ENCODE measurements at regions of chr2 and their contacts with region 1.

Region 1: GRCh38 chr2:219430633-219431615 is 3.7 kb upstream of the SPEG start:
- DNase-seq: no peak
- H3K4me3 ChIP-seq: no peak overlapping the region
- H3K27ac ChIP-seq: peak overlapping the region; percentile 74 to 75
- H3K4me1 ChIP-seq: peaks cover 10 to 18% of the 10 kb centered on the region in 2 donors
- H3K27me3 ChIP-seq: no peaks in the 10 kb centered on the region
- CTCF ChIP-seq: peak; percentile 40 to 53 (median 43)

Region 2: DNA sequence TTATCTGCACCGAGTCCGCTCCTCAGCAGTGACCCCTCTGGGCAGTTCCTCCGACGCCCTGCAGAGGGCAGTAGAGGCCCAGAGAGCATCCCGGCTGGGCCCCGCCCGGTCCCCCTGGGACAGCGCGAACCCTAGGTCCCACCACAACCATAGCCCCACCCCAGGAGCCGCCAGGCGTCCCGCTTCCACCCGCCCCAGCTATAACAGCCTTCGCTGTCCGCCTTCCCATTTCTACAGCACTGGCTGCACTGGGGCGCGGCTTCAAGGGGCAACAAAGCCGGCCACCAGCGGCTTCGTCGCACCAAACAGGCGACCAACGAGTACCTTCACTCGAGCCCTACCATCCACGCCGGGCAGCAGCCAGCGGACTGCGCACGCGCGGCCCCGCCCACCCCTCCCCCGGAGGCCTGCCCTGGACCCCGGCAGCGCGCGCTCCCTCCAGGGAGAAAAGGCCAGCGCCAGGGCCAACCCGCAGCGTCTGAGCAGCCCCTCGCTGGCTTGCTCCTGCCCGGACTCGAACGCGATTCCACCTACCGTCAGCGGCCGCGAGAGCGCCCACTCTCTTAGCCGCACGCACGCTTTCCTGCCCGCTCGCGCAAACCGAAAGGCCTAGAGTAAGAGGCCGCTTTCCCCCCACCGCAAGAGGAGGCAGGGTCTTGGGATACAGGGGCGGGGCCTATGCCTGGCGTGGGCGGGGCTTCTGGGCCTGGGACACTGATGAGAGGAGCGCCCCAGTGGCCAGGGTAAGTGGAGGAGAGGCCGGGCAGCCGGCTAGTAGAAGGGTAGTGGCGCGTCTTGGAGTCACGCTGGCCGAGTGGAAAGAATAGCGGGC is 270.5 kb before region 1 on chr2 and contains the start of gene NHEJ1:
- intact Hi-C with region 1: no loop called
- DNase-seq: peak; percentile 88 to 98
- H3K4me3 ChIP-seq: peak within 1 kb of the TSS; percentile 66 to 86
- H3K27ac ChIP-seq: peak within 1 kb of the TSS; percentile 86 to 89
- H3K4me1 ChIP-seq: peaks cover 0 to 8% of the 10 kb centered on the region in 2 donors
- H3K27me3 ChIP-seq: no peaks in the 10 kb centered on the region
- CTCF ChIP-seq: peak; percentile 97 to 100 (median 100)
- total RNA-seq, gene NHEJ1: 21.6 TPM

Region 3: DNA sequence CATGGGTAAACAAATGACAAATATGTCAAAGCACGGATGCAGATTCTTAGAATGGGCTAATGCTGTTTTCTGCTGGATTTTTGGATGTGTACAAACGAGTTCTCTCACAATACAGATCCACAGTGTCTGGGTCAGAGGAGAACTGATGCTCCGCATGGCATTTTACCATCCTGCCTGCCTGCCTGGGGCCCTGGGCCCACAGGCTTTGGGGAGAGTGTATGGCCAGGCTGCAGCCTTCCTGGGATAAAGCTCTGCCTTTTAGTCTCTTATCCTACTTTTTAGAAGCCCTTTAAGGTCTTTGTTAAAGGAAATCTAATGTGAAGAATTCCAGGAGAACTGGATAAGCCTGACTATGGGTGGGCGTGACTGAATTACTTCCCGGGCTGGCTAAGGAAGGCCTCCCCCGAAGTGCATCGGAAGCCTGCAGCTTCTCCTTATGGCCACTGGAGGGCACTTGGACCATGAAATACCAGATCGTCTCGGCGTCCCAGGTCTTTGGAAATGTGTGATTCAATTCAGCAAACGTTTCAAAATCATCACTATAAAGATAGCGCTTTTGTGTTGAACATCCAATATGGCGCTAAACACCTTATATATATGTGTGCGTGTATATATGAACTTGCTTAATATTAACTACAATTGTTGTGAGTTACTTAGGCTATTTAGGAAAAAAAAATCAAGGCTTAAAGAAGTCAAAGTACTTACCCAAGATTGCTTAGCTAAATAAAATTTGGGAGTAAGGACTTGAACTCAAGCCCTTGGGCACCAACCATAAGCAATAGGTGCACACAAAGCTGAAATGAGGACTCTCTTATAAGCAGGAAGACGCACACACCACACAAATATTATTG is 28.0 kb before region 1 on chr2:
- intact Hi-C with region 1: loop called (anchors 2 kb)
- DNase-seq: peak in 1 of 2 donors; percentile 88
- H3K4me3 ChIP-seq: no peak overlapping the region
- H3K27ac ChIP-seq: peak overlapping the region; percentile 88 to 94
- H3K4me1 ChIP-seq: peaks cover 23 to 42% of the 10 kb centered on the region in 2 donors
- H3K27me3 ChIP-seq: no peaks in the 10 kb centered on the region
- CTCF ChIP-seq: peak; percentile 90 to 95 (median 93)

Region 4: DNA sequence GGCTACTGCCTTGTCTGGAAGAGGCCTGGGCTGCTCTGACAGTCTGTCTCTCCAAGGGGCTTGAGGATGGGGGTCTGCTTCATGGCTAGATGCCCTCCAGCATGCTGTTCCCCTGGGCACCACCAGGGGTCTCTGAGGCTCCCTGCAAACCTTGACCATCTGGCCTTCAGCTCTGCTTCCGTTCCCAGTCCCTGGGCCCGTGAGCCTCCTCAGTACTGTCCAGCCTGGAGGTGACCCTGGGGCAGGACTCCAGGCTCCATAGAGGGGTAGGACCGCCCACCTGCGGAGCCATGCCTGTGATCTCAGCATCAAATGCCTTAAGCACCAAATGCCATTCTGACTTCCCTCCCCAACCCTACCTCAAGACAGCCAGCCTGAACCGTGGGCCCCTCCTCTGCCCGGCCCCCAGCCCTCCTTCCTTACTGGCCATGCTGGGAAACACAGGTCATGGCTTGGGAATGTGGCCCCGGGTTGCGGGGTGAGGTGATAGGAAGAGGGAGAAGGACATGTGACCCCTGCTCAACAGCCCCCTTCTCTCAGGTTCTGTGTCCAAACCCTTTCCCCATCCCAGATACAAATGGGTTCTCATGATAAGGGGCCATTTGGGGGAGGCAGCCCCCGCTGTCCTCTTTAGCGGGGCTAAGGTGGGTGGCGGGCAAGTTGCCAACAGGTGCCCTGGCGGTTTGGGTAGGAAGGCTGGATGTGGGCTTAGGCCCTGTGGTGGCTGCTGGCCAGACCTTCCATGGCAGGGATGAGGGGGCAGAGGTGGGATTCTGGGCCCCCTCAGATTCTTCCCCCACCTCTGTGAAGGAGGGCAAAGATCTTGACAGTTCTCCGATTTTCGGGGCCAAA is 28.8 kb after region 1 on chr2:
- intact Hi-C with region 1: loop called (anchors 2 kb)
- DNase-seq: peak in 1 of 2 donors; percentile 87
- H3K4me3 ChIP-seq: peak overlapping the region in 1 of 2 donors; percentile 42
- H3K27ac ChIP-seq: peak overlapping the region; percentile 91 to 94
- H3K4me1 ChIP-seq: peaks cover 35 to 63% of the 10 kb centered on the region in 2 donors
- H3K27me3 ChIP-seq: no peaks in the 10 kb centered on the region
- CTCF ChIP-seq: peak; percentile 74 to 90 (median 84)

Region 5: DNA sequence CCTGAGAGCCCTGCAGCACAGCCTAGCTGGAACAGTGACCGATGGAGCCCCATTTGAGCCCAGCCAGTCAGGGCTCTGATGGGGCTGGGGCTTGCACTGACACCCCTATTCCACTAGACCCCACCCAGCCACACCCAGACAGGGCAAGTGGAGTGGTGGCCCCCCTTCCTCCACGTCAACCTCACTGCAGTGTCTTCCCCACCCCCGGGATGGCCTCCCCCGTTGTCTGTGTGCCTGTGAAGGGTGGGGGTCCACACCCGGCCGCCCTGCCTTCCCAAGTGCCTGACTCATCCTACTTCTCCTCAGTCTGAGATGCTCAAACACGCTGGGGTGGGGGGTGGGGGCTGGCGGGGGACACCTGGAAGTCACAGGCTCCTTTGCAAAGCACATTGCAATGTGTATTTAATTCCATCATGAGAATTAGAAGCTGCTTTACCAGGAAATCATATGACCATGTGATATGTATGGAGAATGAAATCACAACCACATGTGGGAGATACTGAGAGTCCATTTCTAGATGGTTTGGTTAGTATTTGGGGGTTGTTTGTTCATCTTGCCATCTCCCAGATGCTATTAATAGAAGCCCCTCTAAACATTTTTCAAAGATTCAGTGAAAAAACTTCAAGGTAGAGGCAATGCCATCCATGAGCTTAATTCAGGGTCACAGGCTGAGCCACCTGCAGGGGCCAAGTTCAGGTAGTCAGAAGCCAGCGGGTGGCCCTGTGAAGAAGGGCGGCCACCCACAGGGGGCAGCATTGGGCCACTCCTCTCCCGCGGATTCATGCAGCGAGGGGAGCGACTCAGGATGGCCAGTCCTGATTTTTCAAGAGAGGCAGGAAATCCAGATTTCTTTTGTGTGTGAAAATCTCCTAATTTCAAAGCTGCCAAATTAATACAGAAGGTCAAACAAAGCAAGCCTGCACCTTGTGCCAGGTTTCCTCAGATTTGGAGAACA is 45.0 kb after region 1 on chr2:
- intact Hi-C with region 1: loop called (anchors 2 kb)
- DNase-seq: peak in 1 of 2 donors; percentile 81
- H3K4me3 ChIP-seq: no peak overlapping the region
- H3K27ac ChIP-seq: peak overlapping the region; percentile 51 to 73
- H3K4me1 ChIP-seq: no peaks in the 10 kb centered on the region
- H3K27me3 ChIP-seq: no peaks in the 10 kb centered on the region
- CTCF ChIP-seq: peak; percentile 67 to 88 (median 87)

Region 6: GRCh38 chr2:219498280-219499057 is 67.5 kb after region 1 on chr2 and contains the start of gene GMPPA:
- intact Hi-C with region 1: loop called (anchors 1 kb)
- DNase-seq: peak; percentile 95 to 99
- H3K4me3 ChIP-seq: peak within 1 kb of the TSS; percentile 68 to 85
- H3K27ac ChIP-seq: peak within 1 kb of the TSS; percentile 91 to 99
- H3K4me1 ChIP-seq: peaks cover 13 to 26% of the 10 kb centered on the region in 2 donors
- H3K27me3 ChIP-seq: no peaks in the 10 kb centered on the region
- CTCF ChIP-seq: peak in 1 of 3 experiments; percentile 27
- total RNA-seq, gene GMPPA: 11.4 TPM

Region 7: GRCh38 chr2:219530048-219530963 is 99.4 kb after region 1 on chr2:
- intact Hi-C with region 1: loop called (anchors 1 kb)
- DNase-seq: peak in 1 of 2 donors; percentile 88
- H3K4me3 ChIP-seq: peak overlapping the region in 1 of 2 donors; percentile 55
- H3K27ac ChIP-seq: no peak overlapping the region
- H3K4me1 ChIP-seq: no peaks in the 10 kb centered on the region
- H3K27me3 ChIP-seq: no peaks in the 10 kb centered on the region
- CTCF ChIP-seq: peak; percentile 97 to 99 (median 98)